Calu3 (cell line): ENCODE measurements at regions of chr2 and their contacts with region 1.

Region 1: DNA sequence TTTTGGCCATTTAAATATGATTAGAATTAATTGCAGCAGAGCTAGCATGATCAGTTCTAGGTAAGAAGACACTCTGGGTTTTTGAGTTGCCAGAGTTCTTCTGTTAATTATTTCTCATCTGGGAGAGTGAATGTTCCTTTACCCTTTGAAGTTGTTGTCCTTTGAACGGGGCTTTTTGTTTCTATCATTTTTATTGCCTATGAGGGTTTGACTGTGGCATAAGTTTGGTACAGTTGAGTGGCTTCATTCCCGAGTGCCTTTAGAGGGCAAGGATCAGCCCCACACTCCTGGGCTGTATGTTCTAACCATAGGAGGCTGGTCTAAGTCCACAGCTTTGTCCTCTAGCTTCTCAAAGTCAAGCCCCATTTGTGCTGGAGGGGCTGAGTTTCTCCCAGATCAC is 804.3 kb downstream of the KCNJ3 start:
- DNase-seq: no peak
- H3K4me3 Mint-ChIP-seq: no peak overlapping the region
- H3K27ac Mint-ChIP-seq: no peak overlapping the region
- H3K4me1 Mint-ChIP-seq: no peaks in the 10 kb centered on the region
- H3K27me3 Mint-ChIP-seq: no peaks in the 10 kb centered on the region
- CTCF ChIP-seq: no peak

Region 2: DNA sequence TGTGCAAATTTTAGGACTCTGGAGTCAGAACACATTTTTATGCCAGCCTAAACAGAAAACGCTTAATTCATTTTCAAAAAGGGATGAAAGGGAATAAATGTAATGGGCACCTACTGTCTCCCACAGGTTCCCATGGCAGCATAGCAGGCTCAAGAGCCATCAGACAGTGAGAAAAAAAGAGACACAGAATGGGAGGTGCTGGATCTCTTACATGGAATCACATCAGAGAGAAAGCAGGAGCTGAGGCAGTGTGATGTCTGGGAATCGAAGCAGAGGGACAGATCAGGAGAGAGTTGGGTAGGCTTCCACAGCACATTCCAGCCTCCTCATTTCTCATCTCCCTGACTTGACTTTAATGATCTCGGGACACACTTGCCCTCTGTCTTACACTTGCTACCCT is 120.0 kb before region 1 on chr2:
- CTCF ChIA-PET with region 1: no interaction called
- intact Hi-C with region 1: loop called (anchors 10 kb)
- DNase-seq: no peak
- H3K4me3 Mint-ChIP-seq: no peak overlapping the region
- H3K27ac Mint-ChIP-seq: no peak overlapping the region
- H3K4me1 Mint-ChIP-seq: peaks cover 11% of the 10 kb centered on the region
- H3K27me3 Mint-ChIP-seq: no peaks in the 10 kb centered on the region
- CTCF ChIP-seq: no peak